Head of caudate nucleus (tissue), 42 donors: ENCODE measurements at regions of chr10 and their contacts with region 1.

Region 1: GRCh38 chr10:31928549-31929260 is at the start of gene ARHGAP12:
- DNase-seq: peak; percentile 53 to 93 (median 86)

Region 2: DNA sequence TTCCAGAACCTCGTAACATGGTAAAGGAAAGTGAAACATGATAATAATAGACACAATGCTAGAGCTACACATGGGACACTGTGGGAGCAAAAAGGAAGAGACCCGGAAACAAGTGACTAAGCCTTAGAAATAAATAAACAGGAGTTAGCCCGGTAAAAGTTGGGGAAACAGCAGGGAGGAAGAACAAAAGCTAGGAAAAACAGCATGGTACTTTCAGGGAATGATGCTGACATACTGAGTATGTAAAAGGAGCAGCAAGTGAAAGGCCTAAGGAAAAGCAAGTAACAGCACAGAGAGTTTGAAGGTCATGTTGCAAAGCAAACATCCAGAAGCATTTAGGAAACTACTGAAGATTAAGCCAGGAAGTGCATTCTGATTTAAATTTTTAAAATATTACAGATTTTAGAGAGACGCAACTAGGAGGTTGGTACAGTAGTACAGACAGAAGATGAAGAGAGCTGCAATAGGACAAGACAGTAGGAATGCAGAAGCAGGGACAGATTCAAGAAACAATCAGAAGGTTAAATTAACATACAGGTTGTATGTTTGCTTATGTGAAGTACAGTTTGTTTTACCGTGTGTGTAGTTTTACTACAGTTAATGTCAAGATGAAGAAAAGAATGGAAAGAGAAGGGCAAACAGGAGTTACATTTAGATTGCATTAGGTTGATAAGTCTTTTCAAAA is 63.7 kb before region 1 on chr10:
- intact Hi-C with region 1: loop called (anchors 10 kb)
- DNase-seq: no peak

Region 3: GRCh38 chr10:32055813-32056600 is 127.3 kb after region 1 on chr10 and contains the start of gene KIF5B:
- intact Hi-C with region 1: loop called (anchors 5 kb)
- DNase-seq: peak; percentile 53 to 95 (median 89)